Activated CD4-positive, alpha-beta memory T cell treated with anti-CD3 and anti-CD28 coated beads for 36 hours (primary cell): ENCODE measurements at regions of chr5 and their contacts with region 1.

Region 1: DNA sequence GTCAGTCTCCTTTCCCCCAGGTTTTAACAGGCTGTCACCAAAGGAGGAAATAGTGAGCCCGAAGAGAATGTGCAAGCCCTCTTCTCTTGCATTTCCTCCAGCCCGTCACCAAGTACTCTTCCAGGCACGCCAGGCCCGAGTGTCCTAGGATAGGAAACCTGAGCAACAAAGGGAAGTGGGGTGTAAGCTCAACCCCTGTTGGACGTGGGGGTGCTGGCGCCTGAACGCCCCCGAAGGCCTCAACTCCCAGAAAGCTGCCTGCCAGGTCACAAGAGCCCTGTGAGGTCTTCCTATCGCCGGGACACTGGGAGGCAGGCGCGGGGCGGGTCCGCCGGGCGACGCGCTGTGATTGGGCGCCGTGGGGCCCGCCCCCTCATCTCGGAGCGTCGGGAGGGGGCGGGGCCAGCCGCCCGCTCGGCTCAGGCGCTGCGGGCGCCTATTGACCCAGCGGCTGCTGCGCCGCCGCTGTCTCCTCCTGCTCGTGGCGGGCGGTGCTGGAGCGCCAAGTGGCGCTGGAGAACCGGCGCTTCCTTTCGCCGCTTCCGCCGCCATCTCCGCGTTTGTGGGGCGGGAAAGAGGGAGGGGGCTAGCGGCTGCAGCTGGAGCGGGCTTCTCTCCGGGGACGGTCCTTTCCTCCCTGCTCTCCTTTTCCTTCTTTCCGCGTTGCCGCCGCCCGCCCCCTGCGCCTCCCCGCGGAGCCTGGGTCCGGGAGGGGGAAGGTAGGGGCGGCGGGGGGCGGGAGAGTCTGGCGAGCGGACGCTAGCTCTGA is 572 bp upstream of the MAN2A1 start:
- DNase-seq: peak; percentile 85
- H3K4me3 Mint-ChIP-seq: peak overlapping the region; percentile 87
- H3K27ac Mint-ChIP-seq: peak overlapping the region; percentile 89
- H3K4me1 Mint-ChIP-seq: peaks cover 40% of the 10 kb centered on the region
- H3K27me3 Mint-ChIP-seq: no peaks in the 10 kb centered on the region

Region 2: GRCh38 chr5:108521841-108522506 is 1167.2 kb before region 1 on chr5:
- CTCF ChIA-PET with region 1: no interaction called
- POLR2A ChIA-PET with region 1: no interaction called
- intact Hi-C with region 1: loop called (anchors 5 kb)
- DNase-seq: no peak
- H3K4me3 Mint-ChIP-seq: no peak overlapping the region
- H3K27ac Mint-ChIP-seq: no peak overlapping the region
- H3K4me1 Mint-ChIP-seq: no peaks in the 10 kb centered on the region
- H3K27me3 Mint-ChIP-seq: peaks cover 5% of the 10 kb centered on the region

Region 3: DNA sequence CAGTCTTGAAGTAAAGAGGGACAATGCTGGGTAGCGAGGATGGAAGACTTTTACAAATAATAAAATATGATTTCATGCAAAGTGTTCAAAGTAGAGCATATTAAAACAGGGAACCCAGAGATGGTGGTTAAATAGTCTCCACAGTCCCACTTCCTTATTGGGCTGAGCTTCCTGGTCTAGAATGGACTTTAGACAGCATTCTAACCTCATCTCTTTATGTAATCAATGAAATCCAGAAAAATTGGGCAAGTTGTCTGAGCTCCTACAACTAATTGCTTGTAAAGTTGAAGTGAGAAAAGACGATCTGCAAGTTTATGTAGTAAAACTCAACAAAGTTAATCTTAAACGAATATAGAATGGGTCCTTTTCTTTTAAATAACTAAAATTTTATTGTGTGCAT is 608.3 kb before region 1 on chr5:
- CTCF ChIA-PET with region 1: no interaction called
- POLR2A ChIA-PET with region 1: no interaction called
- intact Hi-C with region 1: no loop called
- DNase-seq: no peak
- H3K4me3 Mint-ChIP-seq: no peak overlapping the region
- H3K27ac Mint-ChIP-seq: no peak overlapping the region
- H3K4me1 Mint-ChIP-seq: no peaks in the 10 kb centered on the region
- H3K27me3 Mint-ChIP-seq: no peaks in the 10 kb centered on the region

Region 4: DNA sequence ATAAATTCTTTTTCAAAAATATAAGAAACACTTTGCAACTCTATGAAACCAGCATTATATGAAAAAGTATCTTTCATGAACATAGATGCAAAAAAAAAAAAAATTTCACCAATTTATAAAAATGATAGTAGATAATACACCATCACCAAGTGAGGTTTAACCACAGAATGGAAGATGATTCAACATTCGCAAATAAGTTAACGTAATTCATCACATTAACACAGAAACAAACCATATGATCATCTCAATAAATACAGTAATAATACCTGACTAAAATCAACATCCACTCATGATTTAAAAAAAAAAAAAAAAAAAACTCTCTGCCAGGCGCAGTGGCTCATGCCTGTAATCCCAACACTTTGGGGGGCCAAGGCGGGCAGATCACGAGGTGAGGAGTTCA is 285.7 kb before region 1 on chr5:
- CTCF ChIA-PET with region 1: no interaction called
- POLR2A ChIA-PET with region 1: no interaction called
- intact Hi-C with region 1: no loop called
- DNase-seq: no peak
- H3K4me3 Mint-ChIP-seq: no peak overlapping the region
- H3K27ac Mint-ChIP-seq: no peak overlapping the region
- H3K4me1 Mint-ChIP-seq: peaks cover 63% of the 10 kb centered on the region
- H3K27me3 Mint-ChIP-seq: no peaks in the 10 kb centered on the region

Region 5: DNA sequence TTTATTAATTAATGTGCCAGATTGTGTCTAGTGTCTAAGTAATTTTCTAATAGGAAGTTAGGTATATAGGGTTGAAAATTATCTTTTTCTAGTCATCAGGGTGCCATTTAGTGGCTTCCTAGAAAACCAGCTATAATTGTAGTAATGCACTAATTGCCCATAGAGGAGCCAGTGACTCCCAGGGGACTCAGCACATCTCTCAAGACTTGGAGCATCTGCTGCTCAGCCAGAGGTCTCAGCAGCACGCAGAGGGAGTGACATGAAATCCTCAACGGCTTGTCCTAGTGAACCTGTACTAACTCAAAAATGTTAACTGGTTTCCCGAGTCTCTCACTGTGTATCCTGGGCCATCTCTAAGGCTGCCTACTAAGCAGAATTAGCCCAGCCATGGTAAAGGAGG is 77.7 kb before region 1 on chr5:
- CTCF ChIA-PET with region 1: no interaction called
- POLR2A ChIA-PET with region 1: no interaction called
- intact Hi-C with region 1: no loop called
- DNase-seq: no peak
- H3K4me3 Mint-ChIP-seq: no peak overlapping the region
- H3K27ac Mint-ChIP-seq: no peak overlapping the region
- H3K4me1 Mint-ChIP-seq: no peaks in the 10 kb centered on the region
- H3K27me3 Mint-ChIP-seq: no peaks in the 10 kb centered on the region

Region 6: DNA sequence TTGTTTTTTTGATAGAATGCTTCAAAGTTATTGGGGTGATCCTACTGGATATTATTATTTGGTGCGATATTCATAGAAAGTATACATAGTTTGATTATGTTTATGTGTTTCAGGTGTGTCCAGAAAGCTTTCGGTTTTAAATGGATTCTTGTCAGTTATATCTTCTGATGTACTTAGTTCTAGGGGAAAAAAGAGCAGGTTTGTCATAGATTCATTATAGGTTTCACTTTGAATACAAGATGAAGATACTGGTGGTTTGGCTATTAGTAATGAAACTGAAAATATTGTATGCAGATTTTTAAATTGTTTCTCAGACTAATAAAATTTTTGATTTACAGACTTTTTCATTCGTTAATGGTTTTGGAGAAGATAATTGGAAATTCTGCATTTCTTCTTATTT is 99.4 kb after region 1 on chr5:
- CTCF ChIA-PET with region 1: interaction called, 3 read pairs
- POLR2A ChIA-PET with region 1: no interaction called
- intact Hi-C with region 1: loop called (anchors 1 kb)
- DNase-seq: no peak
- H3K4me3 Mint-ChIP-seq: no peak overlapping the region
- H3K27ac Mint-ChIP-seq: peak overlapping the region; percentile 14
- H3K4me1 Mint-ChIP-seq: peaks cover 24% of the 10 kb centered on the region
- H3K27me3 Mint-ChIP-seq: no peaks in the 10 kb centered on the region

Region 7: GRCh38 chr5:109816732-109817131 is 127.6 kb after region 1 on chr5:
- CTCF ChIA-PET with region 1: no interaction called
- POLR2A ChIA-PET with region 1: no interaction called
- intact Hi-C with region 1: no loop called
- DNase-seq: no peak
- H3K4me3 Mint-ChIP-seq: no peak overlapping the region
- H3K27ac Mint-ChIP-seq: no peak overlapping the region
- H3K4me1 Mint-ChIP-seq: peaks cover 2% of the 10 kb centered on the region
- H3K27me3 Mint-ChIP-seq: no peaks in the 10 kb centered on the region

Region 8: GRCh38 chr5:109936996-109937395 is 247.8 kb after region 1 on chr5:
- CTCF ChIA-PET with region 1: no interaction called
- POLR2A ChIA-PET with region 1: no interaction called
- intact Hi-C with region 1: loop called (anchors 1 kb)
- DNase-seq: peak; percentile 69
- H3K4me3 Mint-ChIP-seq: no peak overlapping the region
- H3K27ac Mint-ChIP-seq: peak overlapping the region; percentile 57
- H3K4me1 Mint-ChIP-seq: peaks cover 17% of the 10 kb centered on the region
- H3K27me3 Mint-ChIP-seq: peaks cover 1% of the 10 kb centered on the region

Region 9: GRCh38 chr5:110333384-110333783 is 644.2 kb after region 1 on chr5:
- CTCF ChIA-PET with region 1: no interaction called
- POLR2A ChIA-PET with region 1: no interaction called
- intact Hi-C with region 1: loop called (anchors 5 kb)
- DNase-seq: peak; percentile 11
- H3K4me3 Mint-ChIP-seq: no peak overlapping the region
- H3K27ac Mint-ChIP-seq: no peak overlapping the region
- H3K4me1 Mint-ChIP-seq: no peaks in the 10 kb centered on the region
- H3K27me3 Mint-ChIP-seq: no peaks in the 10 kb centered on the region

Region 10: GRCh38 chr5:110625376-110625999 is 936.3 kb after region 1 on chr5:
- CTCF ChIA-PET with region 1: interaction called, 6 read pairs
- POLR2A ChIA-PET with region 1: no interaction called
- intact Hi-C with region 1: loop called (anchors 1 kb)
- DNase-seq: no peak
- H3K4me3 Mint-ChIP-seq: no peak overlapping the region
- H3K27ac Mint-ChIP-seq: no peak overlapping the region
- H3K4me1 Mint-ChIP-seq: no peaks in the 10 kb centered on the region
- H3K27me3 Mint-ChIP-seq: no peaks in the 10 kb centered on the region

Region 11: GRCh38 chr5:111512375-111513130 is 1823.4 kb after region 1 on chr5 and contains the start of gene STARD4:
- CTCF ChIA-PET with region 1: no interaction called
- POLR2A ChIA-PET with region 1: no interaction called
- intact Hi-C with region 1: loop called (anchors 2 kb)
- DNase-seq: peak; percentile 96
- H3K4me3 Mint-ChIP-seq: peak within 1 kb of the TSS; percentile 88
- H3K27ac Mint-ChIP-seq: peak within 1 kb of the TSS; percentile 94
- H3K4me1 Mint-ChIP-seq: peaks cover 35% of the 10 kb centered on the region
- H3K27me3 Mint-ChIP-seq: no peaks in the 10 kb centered on the region
- total RNA-seq, gene STARD4: 49.5 to 49.9 TPM